Activated CD4-positive, alpha-beta memory T cell treated with anti-CD3 and anti-CD28 coated beads, Interleukin-2, amount 10 ng/mL, durations not matched to agents 7 days and 5 days (primary cell): ENCODE measurements at regions of chr19 and their contacts with region 1.

Region 1: GRCh38 chr19:8355631-8356402 is 8.1 kb upstream of the ANGPTL4 start:
- DNase-seq: no peak
- H3K4me3 Mint-ChIP-seq: no peak overlapping the region
- H3K27ac Mint-ChIP-seq: no peak overlapping the region
- H3K4me1 Mint-ChIP-seq: peaks cover 13% of the 10 kb centered on the region
- H3K27me3 Mint-ChIP-seq: peaks cover 14% of the 10 kb centered on the region

Region 2: GRCh38 chr19:8334458-8335342 is 21.1 kb before region 1 on chr19:
- CTCF ChIA-PET with region 1: interaction called, 17 read pairs
- POLR2A ChIA-PET with region 1: no interaction called
- DNase-seq: peak; percentile 48
- H3K4me3 Mint-ChIP-seq: peak overlapping the region; percentile 21
- H3K27ac Mint-ChIP-seq: no peak overlapping the region
- H3K4me1 Mint-ChIP-seq: peaks cover 9% of the 10 kb centered on the region
- H3K27me3 Mint-ChIP-seq: peaks cover 28% of the 10 kb centered on the region

Region 3: DNA sequence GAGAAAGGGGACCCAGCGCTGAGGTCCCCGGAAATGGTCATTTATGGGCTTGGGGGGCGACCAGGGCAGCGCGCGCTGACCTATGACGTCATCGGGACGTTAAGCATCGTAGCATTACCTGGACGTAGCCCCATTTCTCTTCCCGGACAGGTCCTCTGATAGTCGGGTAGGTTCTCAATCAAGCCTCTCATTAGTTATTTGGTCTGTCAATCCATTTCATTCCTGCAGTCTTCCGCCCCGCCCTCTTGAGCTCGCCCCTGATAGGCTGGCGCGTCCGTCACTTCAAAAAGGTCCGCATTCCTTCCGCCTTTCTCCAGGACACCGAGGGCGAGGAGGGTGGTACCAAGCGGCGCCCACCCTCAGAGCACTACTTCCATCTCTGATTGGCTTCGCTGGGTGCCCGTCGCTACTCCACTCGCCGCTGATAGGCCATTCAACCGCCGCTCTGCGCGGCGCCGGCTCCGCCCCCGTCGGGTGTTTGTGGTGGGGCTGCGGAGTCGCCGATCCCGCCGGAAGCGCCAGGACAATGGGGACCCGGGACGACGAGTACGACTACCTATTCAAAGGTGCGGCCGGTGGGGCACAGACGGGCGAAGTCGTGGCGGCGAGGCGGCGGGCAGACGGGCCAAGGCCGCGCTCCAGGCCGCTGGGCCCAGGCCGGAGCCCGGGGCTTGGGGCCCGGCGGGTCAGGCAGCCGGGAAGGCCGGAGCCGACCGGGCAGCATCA is 34.2 kb after region 1 on chr19 and contains the start of gene RAB11B:
- CTCF ChIA-PET with region 1: interaction called, 10 read pairs
- POLR2A ChIA-PET with region 1: no interaction called
- DNase-seq: peak; percentile 100
- H3K4me3 Mint-ChIP-seq: peak within 1 kb of the TSS; percentile 93
- H3K27ac Mint-ChIP-seq: peak within 1 kb of the TSS; percentile 98
- H3K4me1 Mint-ChIP-seq: peaks cover 34% of the 10 kb centered on the region
- H3K27me3 Mint-ChIP-seq: no peaks in the 10 kb centered on the region
- total RNA-seq, gene RAB11B: 90.9 to 93.7 TPM

Region 4: DNA sequence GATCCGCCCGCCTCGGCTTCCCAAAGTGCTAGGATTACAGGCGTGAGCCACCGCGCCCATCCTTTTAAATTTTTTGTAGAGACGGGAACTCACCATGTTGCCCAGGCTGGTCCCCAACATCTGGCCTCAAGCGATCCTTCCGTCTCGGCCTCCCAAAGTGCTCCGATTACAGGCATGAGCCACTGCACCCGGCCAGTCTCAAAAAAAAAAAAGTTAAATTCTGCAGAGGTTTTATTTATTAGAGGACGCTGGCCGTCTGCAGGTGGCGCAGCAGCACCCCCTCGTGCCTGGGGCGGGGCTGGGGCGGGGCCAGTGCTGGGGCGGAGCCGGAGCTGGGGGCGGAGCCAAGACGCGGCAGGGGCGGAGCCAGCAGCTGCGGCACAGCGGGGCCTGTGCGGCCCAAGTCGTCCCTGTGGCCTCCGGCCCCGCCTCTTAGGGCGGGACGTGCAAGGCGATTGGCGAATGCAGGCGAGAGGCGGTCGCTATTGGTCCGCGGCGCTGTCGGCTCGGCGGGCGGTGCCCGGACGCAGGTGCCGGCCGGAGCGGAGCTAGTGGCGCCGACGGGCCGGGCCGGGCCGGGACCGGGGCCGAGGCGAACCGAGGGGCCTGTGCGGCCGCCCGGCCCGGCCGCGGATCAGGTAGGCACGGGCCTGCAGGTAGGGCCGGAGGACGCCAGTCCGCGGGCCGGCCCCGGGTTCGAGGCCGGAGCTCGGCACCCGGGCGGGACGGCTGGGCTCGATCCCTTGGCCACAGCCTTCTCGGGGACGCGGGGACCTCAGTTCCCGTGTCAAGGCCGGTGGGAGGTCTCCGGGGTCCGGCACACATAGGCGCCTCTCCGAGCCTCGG is 57.2 kb after region 1 on chr19 and contains the start of gene MARCHF2:
- CTCF ChIA-PET with region 1: interaction called, 24 read pairs
- POLR2A ChIA-PET with region 1: no interaction called
- DNase-seq: peak; percentile 98
- H3K4me3 Mint-ChIP-seq: peak within 1 kb of the TSS; percentile 58
- H3K27ac Mint-ChIP-seq: no peak within 1 kb of the TSS
- H3K4me1 Mint-ChIP-seq: peaks cover 10% of the 10 kb centered on the region
- H3K27me3 Mint-ChIP-seq: no peaks in the 10 kb centered on the region
- total RNA-seq, gene MARCHF2: 20.6 to 20.8 TPM

Region 5: GRCh38 chr19:8681345-8682029 is 325.7 kb after region 1 on chr19:
- CTCF ChIA-PET with region 1: no interaction called
- POLR2A ChIA-PET with region 1: no interaction called
- DNase-seq: no peak
- H3K4me3 Mint-ChIP-seq: no peak overlapping the region
- H3K27ac Mint-ChIP-seq: peak overlapping the region; percentile 61
- H3K4me1 Mint-ChIP-seq: peaks cover 40% of the 10 kb centered on the region
- H3K27me3 Mint-ChIP-seq: peaks cover 3% of the 10 kb centered on the region